Activated T-helper 2 cell treated with anti-CD3 and anti-CD28 coated beads, Interferon-gamma antibody, Interleukin-2, Interleukin-4, amounts not matched to agents 10 μg/mL and 5 μg/mL and 100 μg/mL, durations not matched to agents 14 hours and 24 hours and 36 hours (primary cell): ENCODE measurements at regions of chr11 and their contacts with region 1.

Region 1: GRCh38 chr11:113553235-113553634 is 78.0 kb upstream of the DRD2 start:
- DNase-seq: no peak
- H3K4me3 Mint-ChIP-seq: no peak overlapping the region
- H3K27ac Mint-ChIP-seq: no peak overlapping the region
- H3K4me1 Mint-ChIP-seq: peaks cover 12% of the 10 kb centered on the region
- H3K27me3 Mint-ChIP-seq: peaks cover 18% of the 10 kb centered on the region

Region 2: DNA sequence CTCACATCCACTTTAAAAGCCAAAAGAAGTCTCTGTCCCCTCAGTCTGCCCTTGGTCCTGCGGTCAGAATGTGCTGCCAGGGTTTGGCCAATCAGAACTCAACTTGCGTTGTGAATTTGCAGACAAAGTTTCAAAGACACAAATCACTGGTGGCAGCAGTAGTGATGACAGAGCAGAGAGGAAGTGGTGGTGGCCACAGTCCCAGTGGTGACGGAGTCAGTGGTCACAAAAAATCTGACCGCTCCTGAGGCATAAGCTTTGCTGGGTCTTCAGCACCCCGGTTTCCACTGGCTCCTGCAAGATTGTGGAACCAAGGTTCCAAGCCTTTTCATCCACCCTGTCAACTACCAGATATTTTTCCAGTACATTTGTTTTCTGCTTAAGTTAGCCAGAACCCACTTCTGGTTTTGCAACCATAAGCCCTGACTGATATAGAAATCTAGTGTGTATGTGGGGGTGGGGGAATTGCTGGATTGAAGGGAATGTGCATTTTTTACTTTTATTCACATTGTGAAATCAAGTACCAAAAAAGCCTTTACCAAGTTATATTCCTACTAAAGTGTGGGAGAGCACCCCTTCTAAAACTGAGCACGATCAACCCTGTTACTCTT is 40.6 kb after region 1 on chr11:
- intact Hi-C with region 1: no loop called
- DNase-seq: peak; percentile 36
- H3K4me3 Mint-ChIP-seq: no peak overlapping the region
- H3K27ac Mint-ChIP-seq: peak overlapping the region; percentile 63
- H3K4me1 Mint-ChIP-seq: peaks cover 36% of the 10 kb centered on the region
- H3K27me3 Mint-ChIP-seq: peaks cover 26% of the 10 kb centered on the region

Region 3: DNA sequence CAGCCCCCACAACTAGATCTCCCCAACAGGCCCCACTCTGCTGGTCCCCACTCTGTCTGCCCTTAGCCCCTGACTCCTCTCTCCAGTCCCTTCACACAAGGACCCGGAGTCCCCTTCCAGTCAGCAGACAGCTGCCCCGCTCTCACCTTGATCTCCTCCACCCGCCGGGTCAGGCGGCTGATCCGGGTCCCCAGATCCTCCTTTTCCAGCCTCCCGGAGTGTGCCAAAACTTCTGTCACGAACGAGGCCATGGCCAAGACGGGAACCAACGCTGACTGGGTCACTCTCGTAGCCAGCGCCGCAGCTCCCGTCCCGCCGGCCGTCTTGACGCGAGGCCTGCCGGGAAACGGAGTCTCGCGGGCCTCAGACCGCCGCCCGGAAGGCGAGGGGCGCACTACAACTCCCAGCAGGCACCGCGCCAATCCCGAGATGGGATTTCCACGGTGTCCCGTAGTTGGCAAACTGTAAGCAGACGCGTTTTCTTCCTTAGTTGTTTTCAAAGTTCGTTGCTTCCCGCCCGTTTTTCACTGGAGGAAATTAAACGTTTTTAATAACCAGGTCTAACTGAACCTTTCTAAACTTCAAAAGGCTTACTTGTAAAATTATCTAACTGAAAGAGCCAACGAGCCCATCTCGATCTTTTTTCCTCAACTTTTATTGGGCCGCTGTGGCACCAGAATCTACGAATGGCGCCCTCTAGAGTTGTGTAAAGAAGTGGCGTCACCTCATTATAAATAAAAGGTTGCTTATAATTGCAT is 220.4 kb after region 1 on chr11 and contains the start of gene ZW10:
- intact Hi-C with region 1: loop called (anchors 10 kb)
- DNase-seq: peak; percentile 90
- H3K4me3 Mint-ChIP-seq: peak within 1 kb of the TSS; percentile 98
- H3K27ac Mint-ChIP-seq: peak within 1 kb of the TSS; percentile 98
- H3K4me1 Mint-ChIP-seq: peaks cover 22% of the 10 kb centered on the region
- H3K27me3 Mint-ChIP-seq: peaks cover 12% of the 10 kb centered on the region
- total RNA-seq, gene ZW10: 24.4 TPM in 2 replicates